ENCODE measurements at regions of chr11 and their contacts with region 1.

Region 1: GRCh38 chr11:130359419-130359818 is 44.7 kb upstream of the ZBTB44 start:
- DNase-seq: no peak
- H3K4me3 Mint-ChIP-seq: no peak overlapping the region
- H3K27ac Mint-ChIP-seq: no peak overlapping the region
- H3K4me1 Mint-ChIP-seq: peaks cover 2% of the 10 kb centered on the region
- H3K27me3 Mint-ChIP-seq: peaks cover 4% of the 10 kb centered on the region

Region 2: GRCh38 chr11:130206141-130206540 is 153.3 kb before region 1 on chr11:
- intact Hi-C with region 1: loop called (anchors 2 kb)
- DNase-seq: no peak
- H3K4me3 Mint-ChIP-seq: no peak overlapping the region
- H3K27ac Mint-ChIP-seq: no peak overlapping the region
- H3K4me1 Mint-ChIP-seq: no peaks in the 10 kb centered on the region
- H3K27me3 Mint-ChIP-seq: no peaks in the 10 kb centered on the region

Region 3: DNA sequence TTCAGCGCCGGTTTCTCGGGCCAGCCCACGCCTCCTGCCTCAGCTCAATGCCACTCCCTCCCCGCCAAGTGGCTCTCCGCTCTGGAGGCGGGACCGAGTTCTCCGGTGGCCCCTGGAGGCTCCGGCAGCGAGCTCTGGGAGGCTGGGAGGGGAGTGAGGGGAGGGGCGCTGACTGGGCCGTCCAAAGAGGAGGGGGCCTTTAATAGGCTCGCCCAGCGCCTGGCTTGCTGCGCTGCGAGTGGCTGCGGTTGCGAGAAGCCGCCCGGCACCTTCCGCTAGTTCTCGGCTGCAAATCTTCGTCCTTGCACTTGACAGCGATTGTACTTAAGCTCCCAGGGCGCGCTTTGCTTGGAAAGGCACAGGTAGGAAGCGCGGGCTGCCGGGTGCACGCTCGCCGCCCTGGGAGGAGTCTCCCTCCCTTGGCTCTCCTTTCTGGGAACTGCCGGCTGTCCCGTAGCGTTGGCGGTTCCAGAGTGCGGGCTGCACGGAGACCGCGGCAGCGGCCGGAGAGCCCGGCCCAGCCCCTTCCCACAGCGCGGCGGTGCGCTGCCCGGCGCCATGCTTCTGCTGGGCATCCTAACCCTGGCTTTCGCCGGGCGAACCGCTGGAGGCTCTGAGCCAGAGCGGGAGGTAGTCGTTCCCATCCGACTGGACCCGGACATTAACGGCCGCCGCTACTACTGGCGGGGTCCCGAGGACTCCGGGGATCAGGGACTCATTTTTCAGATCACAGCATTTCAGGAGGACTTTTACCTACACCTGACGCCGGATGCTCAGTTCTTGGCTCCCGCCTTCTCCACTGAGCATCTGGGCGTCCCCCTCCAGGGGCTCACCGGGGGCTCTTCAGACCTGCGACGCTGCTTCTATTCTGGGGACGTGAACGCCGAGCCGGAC is 89.2 kb after region 1 on chr11 and contains the start of gene ADAMTS15:
- intact Hi-C with region 1: no loop called
- DNase-seq: peak; percentile 47
- H3K4me3 Mint-ChIP-seq: peak within 1 kb of the TSS; percentile 52
- H3K27ac Mint-ChIP-seq: no peak within 1 kb of the TSS
- H3K4me1 Mint-ChIP-seq: peaks cover 2% of the 10 kb centered on the region
- H3K27me3 Mint-ChIP-seq: peaks cover 51% of the 10 kb centered on the region
- total RNA-seq, gene ADAMTS15: not detected in 2 replicates

Measured in activated T-helper 2 cell treated with anti-CD3 and anti-CD28 coated beads, Interferon-gamma antibody, Interleukin-2, Interleukin-4, amounts not matched to agents 10 μg/mL and 5 μg/mL and 100 μg/mL, durations not matched to agents 14 hours and 24 hours and 36 hours (primary cell).